K562 (cell line): ENCODE measurements at regions of chr1 and their contacts with region 1.

Region 1: GRCh38 chr1:208437416-208437815 is 193.2 kb upstream of the PLXNA2 start:
- DNase-seq: no peak
- ATAC-seq: no peak
- H3K4me3 ChIP-seq: no peak overlapping the region
- H3K27ac ChIP-seq: no peak overlapping the region
- H3K4me1 ChIP-seq: no peaks in the 10 kb centered on the region
- H3K27me3 ChIP-seq: peaks cover 4 to 8% of the 10 kb centered on the region in 2 experiments; a peak in 4 of 5 replicates
- CTCF ChIP-seq: no peak
- EP300 ChIP-seq: no peak
- POLR2A ChIP-seq: no peak
- RAD21 ChIP-seq: no peak

Region 2: DNA sequence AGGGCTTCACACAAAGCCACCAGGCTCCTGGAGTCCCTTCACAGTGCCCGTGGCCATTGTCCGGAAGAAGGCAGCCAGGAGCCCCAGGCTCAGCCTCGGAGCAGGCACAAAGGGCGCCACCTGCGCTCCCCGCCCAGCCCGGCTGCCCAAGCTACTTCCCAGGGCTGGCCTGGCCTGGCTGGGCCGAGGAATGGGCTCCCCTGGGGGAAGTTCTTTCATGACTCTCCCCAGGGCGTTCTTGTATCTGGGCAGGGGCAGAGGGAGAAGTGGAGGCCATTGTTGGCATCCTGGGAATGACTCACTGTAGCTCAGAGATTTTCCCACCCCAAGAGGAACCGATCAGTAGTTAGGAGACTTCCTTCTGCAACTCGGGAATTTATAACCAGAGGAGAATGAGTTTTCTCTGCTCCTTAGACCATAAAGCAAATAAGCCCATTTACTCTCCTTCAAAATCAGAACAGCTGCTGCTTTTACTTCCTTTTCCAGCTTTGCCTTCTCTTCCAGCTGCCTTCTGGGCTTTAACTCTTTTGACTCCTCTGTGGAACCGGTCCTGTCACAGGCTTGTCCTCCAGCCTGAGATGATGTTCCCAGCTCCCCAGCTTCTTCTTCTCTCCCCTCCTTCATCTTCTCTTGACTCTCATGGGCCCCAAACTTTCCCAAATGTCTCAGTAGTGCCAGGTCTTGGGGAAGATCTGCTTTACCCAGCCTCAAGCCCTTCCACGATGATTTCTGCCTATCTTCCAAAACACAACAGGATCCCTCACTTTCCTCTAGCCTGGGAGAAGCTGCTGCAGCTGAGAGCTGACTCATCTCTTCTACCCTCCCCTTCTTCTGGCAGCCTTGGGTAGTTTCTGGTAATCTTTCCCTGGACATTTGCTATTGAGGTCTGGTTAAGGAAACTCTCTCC is 407.8 kb before region 1 on chr1:
- CTCF ChIA-PET with region 1: no interaction called
- POLR2A ChIA-PET with region 1: no interaction called
- in situ Hi-C with region 1: no loop called
- intact Hi-C with region 1: loop called (anchors 5 kb)
- DNase-seq: no peak
- ATAC-seq: no peak
- H3K4me3 ChIP-seq: no peak overlapping the region
- H3K27ac ChIP-seq: no peak overlapping the region
- H3K4me1 ChIP-seq: no peaks in the 10 kb centered on the region
- H3K27me3 ChIP-seq: peaks cover 61 to 87% of the 10 kb centered on the region in 2 experiments
- CTCF ChIP-seq: no peak
- EP300 ChIP-seq: no peak
- POLR2A ChIP-seq: no peak
- RAD21 ChIP-seq: no peak